Left cardiac atrium (tissue), 4 donors: ENCODE measurements at regions of chr21 and their contacts with region 1.

Region 1: GRCh38 chr21:46228345-46229051 is at the start of gene LSS:
- DNase-seq: peak; percentile 99
- ATAC-seq: peak; percentile 94
- total RNA-seq, gene LSS: 66.4 to 66.7 TPM

Region 2: DNA sequence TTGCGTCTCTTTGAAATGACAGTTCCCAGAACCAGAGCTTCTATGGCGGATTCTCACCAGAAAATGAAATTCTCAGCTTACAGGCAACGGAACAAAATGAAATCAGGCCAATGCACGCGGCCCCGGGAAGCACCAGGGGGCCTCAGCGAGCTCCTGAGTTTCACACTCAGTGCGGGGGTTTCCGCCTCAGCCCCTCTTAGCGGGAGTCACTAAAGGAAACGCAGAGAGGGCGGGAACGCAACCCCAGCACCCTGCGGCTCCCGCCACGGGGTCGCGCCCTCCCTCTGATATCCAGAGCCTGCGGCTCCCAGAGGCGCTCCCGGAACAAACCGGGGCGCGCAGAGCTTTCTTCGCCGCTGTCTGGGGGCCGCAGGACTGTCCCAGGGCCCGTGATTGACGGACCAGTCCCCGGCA is 254.8 kb before region 1 on chr21:
- intact Hi-C with region 1: loop called in 1 of 2 experiments (anchors 10 kb)
- DNase-seq: peak; percentile 90
- ATAC-seq: peak; percentile 56 to 60

Region 3: DNA sequence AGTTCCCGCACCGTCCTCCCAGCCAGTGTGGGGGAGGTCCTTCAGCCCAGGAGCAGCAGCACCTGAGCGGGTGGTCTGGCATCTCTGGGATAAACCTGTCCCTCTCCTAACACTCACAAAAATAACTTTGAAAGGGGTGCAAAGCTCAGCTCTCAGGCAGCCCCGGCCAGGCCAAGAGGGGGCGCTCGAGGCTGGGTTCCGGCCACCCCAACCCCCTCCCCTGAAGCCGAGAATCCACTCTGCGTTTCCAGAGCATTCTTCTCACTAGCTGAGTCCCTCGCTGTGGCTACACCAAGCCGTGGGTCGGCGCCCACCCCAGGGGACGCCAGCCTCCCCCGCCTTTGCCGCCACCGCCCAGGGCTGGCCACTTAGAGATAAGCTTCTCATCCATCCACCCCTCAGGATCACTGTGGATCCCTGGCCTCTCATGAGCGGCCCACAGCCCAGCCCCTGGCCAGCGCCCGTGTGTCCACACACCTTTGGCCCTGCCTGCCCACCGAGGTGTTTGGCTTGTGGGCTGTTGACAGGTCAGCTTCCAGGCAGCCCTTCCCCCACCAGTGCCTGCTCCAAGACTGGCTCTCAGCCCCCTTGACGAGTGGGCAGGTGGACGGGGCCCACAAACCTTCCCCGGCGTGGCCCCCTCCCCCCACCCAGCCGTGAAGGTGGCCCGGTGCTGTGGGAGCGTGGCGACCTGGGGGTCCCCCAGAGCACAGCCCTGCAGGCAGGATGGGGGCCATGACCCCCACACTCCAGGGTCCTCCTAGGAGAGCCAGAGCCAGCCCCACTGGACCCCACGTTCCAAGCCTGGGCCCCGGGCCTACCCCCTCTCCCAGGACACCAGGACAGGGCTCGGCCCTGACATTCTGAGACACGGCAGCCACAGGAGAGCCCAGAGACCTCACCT is 75.0 kb before region 1 on chr21:
- intact Hi-C with region 1: loop called in 1 of 2 experiments (anchors 10 kb)
- DNase-seq: no peak
- ATAC-seq: peak; percentile 72 to 76

Region 4: GRCh38 chr21:46184625-46185555 is 43.6 kb before region 1 on chr21:
- intact Hi-C with region 1: loop called in 1 of 2 experiments (anchors 5 kb)
- DNase-seq: peak; percentile 91
- ATAC-seq: peak; percentile 67 to 77

Region 5: DNA sequence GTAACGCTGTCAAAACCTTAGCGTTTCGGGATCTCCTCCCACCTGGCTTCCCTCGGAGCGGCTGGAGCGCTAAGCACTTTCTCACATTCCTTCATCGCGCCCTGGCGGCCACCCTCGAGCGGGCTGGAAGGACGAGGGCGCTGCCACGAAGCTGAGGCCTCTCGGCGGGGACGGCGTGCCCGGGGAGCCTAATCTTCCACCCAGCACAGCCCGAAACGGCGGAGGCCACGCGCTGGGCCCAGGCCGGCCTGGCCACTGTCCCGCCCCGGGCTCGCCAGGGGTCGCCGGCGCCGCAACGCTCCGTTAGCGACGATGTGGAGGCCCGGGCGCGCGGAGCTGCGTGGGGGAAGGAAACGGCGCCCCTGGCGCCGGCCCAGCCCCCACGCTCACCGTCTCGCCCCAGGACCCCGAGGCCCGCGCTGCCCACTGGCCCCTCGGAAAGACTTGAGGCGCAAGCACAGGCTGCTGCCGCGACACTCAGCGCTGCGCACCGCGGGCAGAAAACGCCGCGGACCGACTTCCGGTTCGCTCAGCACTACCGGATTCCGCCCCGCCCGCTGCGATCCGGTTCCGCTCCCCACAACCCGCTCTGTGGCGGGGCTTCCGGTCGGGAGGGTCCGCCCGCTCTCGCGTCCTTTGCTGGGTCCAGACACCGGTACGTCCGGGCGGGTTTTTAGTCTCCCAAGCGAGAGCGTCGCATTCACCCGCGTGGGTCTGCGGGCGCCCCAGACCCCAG is 57.4 kb after region 1 on chr21 and contains the start of gene YBEY:
- intact Hi-C with region 1: loop called in 1 of 2 experiments (anchors 5 kb)
- DNase-seq: peak; percentile 94
- ATAC-seq: peak; percentile 97
- total RNA-seq, gene YBEY: 15.5 to 17.5 TPM